ENCODE measurements at regions of chr17 and their contacts with region 1.

Region 1: GRCh38 chr17:74748529-74749365 is at the start of gene NHERF1:
- DNase-seq: peak; percentile 45 to 98 (median 91)
- ATAC-seq: peak; percentile 95
- H3K4me3 ChIP-seq: peak within 1 kb of the TSS; percentile 95
- H3K4me3 Mint-ChIP-seq: peak within 1 kb of the TSS; percentile 96 to 100 (median 98)
- H3K27ac ChIP-seq: peak within 1 kb of the TSS; percentile 90
- H3K27ac Mint-ChIP-seq: peak within 1 kb of the TSS; percentile 80 to 97 (median 93)
- H3K4me1 ChIP-seq: peaks cover 54 to 59% of the 10 kb centered on the region in 2 donors
- H3K4me1 Mint-ChIP-seq: peaks cover 54 to 68% (median 62%) of the 10 kb centered on the region in 7 donors
- H3K27me3 ChIP-seq: no peaks in the 10 kb centered on the region
- H3K27me3 Mint-ChIP-seq: no peaks in the 10 kb centered on the region
- total RNA-seq, gene NHERF1: 93.1 to 279 (median 156) TPM

Region 2: GRCh38 chr17:74163271-74163821 is 585.4 kb before region 1 on chr17:
- CTCF ChIA-PET with region 1: no interaction called
- POLR2A ChIA-PET with region 1: no interaction called
- intact Hi-C with region 1: no loop called
- DNase-seq: no peak
- ATAC-seq: no peak
- H3K4me3 ChIP-seq: no peak overlapping the region
- H3K4me3 Mint-ChIP-seq: no peak overlapping the region
- H3K27ac ChIP-seq: no peak overlapping the region
- H3K27ac Mint-ChIP-seq: no peak overlapping the region
- H3K4me1 ChIP-seq: no peaks in the 10 kb centered on the region
- H3K4me1 Mint-ChIP-seq: no peaks in the 10 kb centered on the region
- H3K27me3 ChIP-seq: no peaks in the 10 kb centered on the region
- H3K27me3 Mint-ChIP-seq: peaks cover 5 to 29% (median 19%) of the 10 kb centered on the region in 5 donors

Region 3: GRCh38 chr17:74203439-74204240 is 545.1 kb before region 1 on chr17 and contains the start of gene RPL38:
- CTCF ChIA-PET with region 1: no interaction called
- POLR2A ChIA-PET with region 1: interaction called, 3 read pairs
- intact Hi-C with region 1: loop called in 1 of 2 experiments (anchors 10 kb)
- DNase-seq: peak; percentile 83 to 95 (median 94)
- ATAC-seq: peak; percentile 98
- H3K4me3 ChIP-seq: peak within 1 kb of the TSS; percentile 89
- H3K4me3 Mint-ChIP-seq: peak within 1 kb of the TSS; percentile 85 to 100 (median 98)
- H3K27ac ChIP-seq: peak within 1 kb of the TSS; percentile 86
- H3K27ac Mint-ChIP-seq: peak within 1 kb of the TSS; percentile 89 to 98 (median 96)
- H3K4me1 ChIP-seq: peaks cover 16 to 20% of the 10 kb centered on the region in 2 donors
- H3K4me1 Mint-ChIP-seq: peaks cover 24 to 49% (median 34%) of the 10 kb centered on the region in 7 donors
- H3K27me3 ChIP-seq: peaks cover 0 to 5% of the 10 kb centered on the region in 2 donors
- H3K27me3 Mint-ChIP-seq: peaks cover 8 to 16% (median 11%) of the 10 kb centered on the region in 5 donors
- total RNA-seq, gene RPL38: 1,097 to 2,553 (median 2,002) TPM

Region 4: DNA sequence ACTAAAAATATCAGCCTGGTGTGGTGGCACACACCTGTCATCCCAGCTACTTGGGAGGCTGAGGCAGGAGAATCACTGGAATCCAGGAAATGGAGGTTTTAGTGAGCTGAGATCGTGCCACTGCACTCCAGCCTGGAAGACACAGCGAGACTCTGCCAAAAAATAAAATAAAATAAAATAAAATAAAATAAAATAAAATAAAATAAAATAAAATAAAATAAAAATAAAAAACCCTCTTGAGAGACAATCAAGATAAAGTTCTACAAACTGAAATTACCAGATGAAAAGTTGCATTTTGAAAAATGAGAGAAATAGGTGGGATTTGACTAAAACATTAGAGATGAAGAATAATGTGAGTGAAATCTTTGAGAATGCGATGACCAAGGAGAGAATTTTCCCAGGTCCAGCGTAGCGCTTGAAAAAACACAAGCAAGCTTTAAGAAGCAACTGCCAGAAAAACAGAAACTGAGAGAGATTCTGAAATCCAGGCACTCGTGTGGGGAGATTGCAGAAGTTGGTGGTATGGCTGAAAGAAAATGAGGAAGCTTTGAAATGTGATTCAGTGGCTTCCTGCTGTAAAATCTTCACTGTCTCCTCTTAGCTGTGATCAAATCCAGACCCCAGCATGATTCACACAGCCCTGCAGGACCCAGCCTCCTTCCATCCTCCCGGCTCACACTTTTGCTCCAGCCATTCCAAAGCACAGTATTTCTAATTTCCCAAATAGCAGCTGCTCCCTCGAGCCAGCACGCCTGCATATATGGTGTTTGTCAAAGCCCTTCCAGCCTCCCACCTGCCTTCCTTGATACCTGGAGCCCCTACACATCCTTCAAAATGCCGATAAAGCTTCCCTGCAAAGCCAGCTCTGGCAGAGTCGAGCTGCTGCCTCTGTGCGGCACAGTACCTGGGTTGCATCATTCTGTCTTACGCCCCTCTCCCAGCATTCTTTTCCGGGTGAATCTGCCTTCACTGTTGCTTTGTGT is 117.0 kb before region 1 on chr17:
- CTCF ChIA-PET with region 1: no interaction called
- POLR2A ChIA-PET with region 1: no interaction called
- intact Hi-C with region 1: no loop called
- DNase-seq: no peak
- ATAC-seq: peak; percentile 89
- H3K4me3 ChIP-seq: no peak overlapping the region
- H3K4me3 Mint-ChIP-seq: no peak overlapping the region
- H3K27ac ChIP-seq: no peak overlapping the region
- H3K27ac Mint-ChIP-seq: no peak overlapping the region
- H3K4me1 ChIP-seq: no peaks in the 10 kb centered on the region
- H3K4me1 Mint-ChIP-seq: peaks cover 0 to 11% (median 9%) of the 10 kb centered on the region in 7 donors
- H3K27me3 ChIP-seq: peaks cover 0 to 5% of the 10 kb centered on the region in 2 donors
- H3K27me3 Mint-ChIP-seq: peaks cover 21 to 67% (median 34%) of the 10 kb centered on the region in 5 donors

Region 5: DNA sequence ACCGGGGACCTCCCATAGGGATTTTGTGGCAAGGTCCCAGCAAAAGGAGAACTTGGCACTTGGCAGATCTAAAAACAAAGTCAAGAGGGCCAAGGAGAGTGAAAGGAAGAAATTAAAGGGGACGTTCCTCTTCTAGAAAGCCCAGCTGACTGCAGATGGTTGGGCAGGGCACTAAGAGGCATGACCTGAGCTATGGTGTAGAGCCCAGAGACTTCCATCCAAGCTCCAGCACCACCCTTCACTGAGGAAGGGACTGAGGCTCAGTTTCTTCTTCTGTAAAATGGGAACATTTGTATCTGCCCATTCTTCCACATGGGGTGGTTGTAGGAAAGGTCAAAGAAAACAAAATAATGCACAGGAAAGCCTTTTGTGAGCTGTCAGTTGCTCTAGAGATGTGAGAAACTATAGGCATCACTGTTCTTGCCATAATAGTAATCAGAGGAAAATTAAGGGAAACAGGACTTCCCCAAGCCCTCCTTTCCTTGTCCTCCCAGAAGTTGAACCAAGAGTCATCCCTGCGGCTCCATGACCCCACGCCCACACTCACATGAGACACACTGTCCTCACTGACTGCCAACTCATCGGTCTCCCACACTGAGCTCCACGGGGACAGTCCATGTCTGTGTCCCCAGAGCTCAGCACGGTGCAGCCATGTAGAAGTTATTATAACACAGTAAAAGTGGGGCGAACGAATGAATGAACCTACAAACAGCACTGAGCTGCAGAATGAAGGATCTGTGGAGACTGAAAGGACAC is 46.5 kb before region 1 on chr17:
- CTCF ChIA-PET with region 1: no interaction called
- POLR2A ChIA-PET with region 1: no interaction called
- intact Hi-C with region 1: no loop called
- DNase-seq: no peak
- ATAC-seq: no peak
- H3K4me3 ChIP-seq: no peak overlapping the region
- H3K4me3 Mint-ChIP-seq: no peak overlapping the region
- H3K27ac ChIP-seq: no peak overlapping the region
- H3K27ac Mint-ChIP-seq: peak overlapping the region in 1 of 9 donors; percentile 43
- H3K4me1 ChIP-seq: no peaks in the 10 kb centered on the region
- H3K4me1 Mint-ChIP-seq: peaks cover 0 to 2% (median 0%) of the 10 kb centered on the region in 7 donors
- H3K27me3 ChIP-seq: no peaks in the 10 kb centered on the region
- H3K27me3 Mint-ChIP-seq: peaks cover 0 to 49% (median 0%) of the 10 kb centered on the region in 5 donors

Region 6: GRCh38 chr17:74759243-74759801 is 10.6 kb after region 1 on chr17:
- CTCF ChIA-PET with region 1: interaction called, 56 read pairs
- POLR2A ChIA-PET with region 1: interaction called, 54 read pairs
- intact Hi-C with region 1: loop called (anchors 1 kb)
- DNase-seq: peak in 6 of 9 donors; percentile 47 to 60 (median 56)
- ATAC-seq: peak; percentile 86
- H3K4me3 ChIP-seq: peak overlapping the region; percentile 60
- H3K4me3 Mint-ChIP-seq: peak overlapping the region; percentile 82 to 92 (median 84)
- H3K27ac ChIP-seq: peak overlapping the region; percentile 49
- H3K27ac Mint-ChIP-seq: peak overlapping the region; percentile 75 to 97 (median 90)
- H3K4me1 ChIP-seq: peaks cover 69 to 82% of the 10 kb centered on the region in 2 donors
- H3K4me1 Mint-ChIP-seq: peaks cover 44 to 78% (median 62%) of the 10 kb centered on the region in 7 donors
- H3K27me3 ChIP-seq: no peaks in the 10 kb centered on the region
- H3K27me3 Mint-ChIP-seq: no peaks in the 10 kb centered on the region

Region 7: GRCh38 chr17:74790161-74791054 is 41.7 kb after region 1 on chr17:
- CTCF ChIA-PET with region 1: interaction called, 10 read pairs
- POLR2A ChIA-PET with region 1: interaction called, 3 read pairs
- intact Hi-C with region 1: loop called (anchors 1 kb)
- DNase-seq: peak in 2 of 9 donors; percentile 24
- ATAC-seq: no peak
- H3K4me3 ChIP-seq: no peak overlapping the region
- H3K4me3 Mint-ChIP-seq: peak overlapping the region; percentile 41 to 81 (median 72)
- H3K27ac ChIP-seq: peak overlapping the region; percentile 19
- H3K27ac Mint-ChIP-seq: peak overlapping the region; percentile 48 to 88 (median 81)
- H3K4me1 ChIP-seq: peaks cover 13 to 39% of the 10 kb centered on the region in 2 donors
- H3K4me1 Mint-ChIP-seq: peaks cover 28 to 64% (median 46%) of the 10 kb centered on the region in 7 donors
- H3K27me3 ChIP-seq: no peaks in the 10 kb centered on the region
- H3K27me3 Mint-ChIP-seq: no peaks in the 10 kb centered on the region

Region 8: DNA sequence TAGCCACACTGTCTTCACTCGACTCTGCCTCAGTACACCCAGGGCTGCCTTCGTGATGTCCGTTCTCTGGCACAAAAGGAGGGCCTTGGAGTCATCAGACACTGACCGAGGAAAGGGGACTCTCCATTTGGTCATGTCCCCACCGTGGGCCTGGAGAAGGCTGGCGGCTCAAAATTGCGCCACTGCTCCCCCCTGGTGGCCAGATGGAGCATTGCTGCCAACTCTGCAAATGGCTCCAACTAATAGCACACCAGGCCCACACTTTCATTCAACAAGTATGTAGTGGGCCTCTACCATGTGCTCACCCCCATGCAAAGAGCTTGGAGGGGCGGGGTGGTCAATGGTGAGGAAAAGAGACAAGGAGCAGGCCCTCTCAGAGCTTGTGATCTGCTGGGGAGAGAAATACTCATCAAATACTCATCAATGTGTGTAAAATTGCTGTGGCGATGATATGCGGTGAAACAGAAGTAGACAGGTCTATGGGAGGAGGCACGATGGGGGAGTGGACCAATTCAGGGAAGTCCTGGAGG is 116.2 kb after region 1 on chr17:
- CTCF ChIA-PET with region 1: interaction called, 8 read pairs
- POLR2A ChIA-PET with region 1: interaction called, 4 read pairs
- intact Hi-C with region 1: loop called (anchors 1 kb)
- DNase-seq: peak; percentile 35 to 73 (median 59)
- ATAC-seq: peak; percentile 74
- H3K4me3 ChIP-seq: no peak overlapping the region
- H3K4me3 Mint-ChIP-seq: peak overlapping the region in 1 of 10 donors; percentile 35
- H3K27ac ChIP-seq: no peak overlapping the region
- H3K27ac Mint-ChIP-seq: peak overlapping the region in 2 of 9 donors; percentile 16 to 47
- H3K4me1 ChIP-seq: peaks cover 12 to 14% of the 10 kb centered on the region in 2 donors
- H3K4me1 Mint-ChIP-seq: peaks cover 0 to 23% (median 16%) of the 10 kb centered on the region in 7 donors
- H3K27me3 ChIP-seq: peaks cover 4 to 7% of the 10 kb centered on the region in 2 donors
- H3K27me3 Mint-ChIP-seq: peaks cover 3 to 24% (median 11%) of the 10 kb centered on the region in 5 donors

Region 9: GRCh38 chr17:75182569-75183450 is 434.1 kb after region 1 on chr17 and contains the start of gene SUMO2:
- CTCF ChIA-PET with region 1: no interaction called
- POLR2A ChIA-PET with region 1: no interaction called
- intact Hi-C with region 1: loop called in 1 of 2 experiments (anchors 10 kb)
- DNase-seq: peak; percentile 90 to 97 (median 94)
- ATAC-seq: peak; percentile 92
- H3K4me3 ChIP-seq: peak within 1 kb of the TSS; percentile 56
- H3K4me3 Mint-ChIP-seq: peak within 1 kb of the TSS; percentile 87 to 100 (median 92)
- H3K27ac ChIP-seq: peak within 1 kb of the TSS; percentile 94
- H3K27ac Mint-ChIP-seq: peak within 1 kb of the TSS; percentile 92 to 99 (median 97)
- H3K4me1 ChIP-seq: peaks cover 22 to 26% of the 10 kb centered on the region in 2 donors
- H3K4me1 Mint-ChIP-seq: peaks cover 20 to 55% (median 38%) of the 10 kb centered on the region in 7 donors
- H3K27me3 ChIP-seq: no peaks in the 10 kb centered on the region
- H3K27me3 Mint-ChIP-seq: no peaks in the 10 kb centered on the region
- total RNA-seq, gene SUMO2: 201 to 494 (median 247) TPM

Region 10: DNA sequence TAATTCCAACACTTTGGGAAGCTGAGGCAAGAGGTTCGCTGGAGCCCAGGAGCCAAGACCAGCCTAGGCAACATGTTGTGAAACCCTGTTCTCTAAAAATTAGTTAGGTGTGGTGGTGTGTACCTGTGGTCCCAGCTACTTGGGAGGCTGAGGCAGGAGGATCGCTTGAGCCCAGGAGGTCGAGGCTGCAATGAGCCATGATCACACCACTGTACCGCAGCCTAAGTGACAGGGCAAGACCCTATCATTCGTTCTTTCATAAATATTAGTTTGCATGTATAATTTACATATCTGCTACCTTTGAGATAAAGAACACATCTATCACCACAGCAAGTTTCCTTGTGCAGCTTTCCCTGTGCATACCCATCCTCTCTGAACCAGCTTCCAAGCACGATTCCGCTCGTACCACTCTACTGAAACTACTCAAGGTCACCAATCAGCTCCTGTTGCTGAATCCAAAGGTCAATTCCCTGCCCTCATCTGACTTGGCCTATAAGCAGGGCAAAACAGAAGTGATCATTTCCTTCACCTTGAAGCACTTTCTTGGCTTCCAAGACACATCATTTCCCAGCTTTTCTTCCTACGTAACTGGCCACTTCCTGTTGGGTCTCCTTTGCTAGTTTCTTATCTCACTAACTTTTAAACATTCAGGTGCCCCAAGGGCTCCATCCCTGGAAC is 607.7 kb after region 1 on chr17:
- CTCF ChIA-PET with region 1: no interaction called
- POLR2A ChIA-PET with region 1: no interaction called
- intact Hi-C with region 1: no loop called
- DNase-seq: no peak
- ATAC-seq: no peak
- H3K4me3 ChIP-seq: no peak overlapping the region
- H3K4me3 Mint-ChIP-seq: peak overlapping the region in 5 of 10 donors; percentile 14 to 37 (median 19)
- H3K27ac ChIP-seq: no peak overlapping the region
- H3K27ac Mint-ChIP-seq: peak overlapping the region in 7 of 9 donors; percentile 2 to 77 (median 50)
- H3K4me1 ChIP-seq: peaks cover 8 to 29% of the 10 kb centered on the region in 2 donors
- H3K4me1 Mint-ChIP-seq: peaks cover 46 to 84% (median 65%) of the 10 kb centered on the region in 7 donors
- H3K27me3 ChIP-seq: no peaks in the 10 kb centered on the region
- H3K27me3 Mint-ChIP-seq: no peaks in the 10 kb centered on the region